Activated B cell treated with CpG ODN at 0.5 μM for 24 hours (primary cell): ENCODE measurements at regions of chr2 and their contacts with region 1.

Region 1: DNA sequence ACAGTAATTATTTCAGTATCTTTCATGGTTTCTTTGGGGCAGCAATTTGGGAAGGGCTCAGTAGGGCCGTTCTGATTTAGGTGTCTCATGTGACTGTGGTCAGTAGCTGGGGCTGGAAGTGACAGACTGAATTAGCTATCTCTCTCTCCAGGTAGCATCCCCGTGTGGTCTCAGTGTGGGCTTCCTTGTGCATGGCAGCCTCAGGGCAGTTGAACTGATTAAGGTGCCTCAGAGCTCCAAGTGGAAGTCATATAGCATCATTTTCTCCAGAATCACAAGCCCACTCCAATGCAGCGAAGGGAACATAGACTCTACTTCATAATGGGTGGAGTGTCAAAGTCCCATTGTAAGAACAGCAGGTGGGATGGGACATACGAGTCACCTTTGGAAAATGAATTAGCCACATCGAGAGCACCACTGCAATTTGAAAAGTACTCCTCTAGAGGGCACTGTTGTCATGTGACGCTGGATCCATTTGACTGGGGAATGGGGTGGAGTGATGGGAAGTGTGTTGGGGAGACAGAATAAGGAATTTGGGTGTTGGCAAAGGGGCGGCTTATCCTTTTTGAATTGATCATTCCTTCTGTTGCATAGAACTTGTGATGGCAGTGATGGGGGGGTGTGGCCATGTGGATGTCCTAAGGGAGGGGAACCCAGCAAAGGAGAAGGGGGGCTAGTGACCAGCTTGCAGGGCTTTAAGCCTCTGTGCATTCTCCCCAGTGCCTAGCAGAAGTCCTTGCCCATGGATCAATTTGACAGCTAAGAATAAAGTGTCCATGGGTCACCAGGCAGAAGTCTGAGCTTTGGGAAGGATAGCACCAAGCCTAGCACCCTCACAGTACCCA is 39.3 kb upstream of the FAM136A start:
- DNase-seq: no peak
- ATAC-seq: no peak
- H3K4me3 Mint-ChIP-seq: no peak overlapping the region
- H3K27ac Mint-ChIP-seq: no peak overlapping the region
- H3K4me1 Mint-ChIP-seq: no peaks in the 10 kb centered on the region
- H3K27me3 Mint-ChIP-seq: peaks cover 27% of the 10 kb centered on the region
- CTCF ChIP-seq: no peak

Region 2: DNA sequence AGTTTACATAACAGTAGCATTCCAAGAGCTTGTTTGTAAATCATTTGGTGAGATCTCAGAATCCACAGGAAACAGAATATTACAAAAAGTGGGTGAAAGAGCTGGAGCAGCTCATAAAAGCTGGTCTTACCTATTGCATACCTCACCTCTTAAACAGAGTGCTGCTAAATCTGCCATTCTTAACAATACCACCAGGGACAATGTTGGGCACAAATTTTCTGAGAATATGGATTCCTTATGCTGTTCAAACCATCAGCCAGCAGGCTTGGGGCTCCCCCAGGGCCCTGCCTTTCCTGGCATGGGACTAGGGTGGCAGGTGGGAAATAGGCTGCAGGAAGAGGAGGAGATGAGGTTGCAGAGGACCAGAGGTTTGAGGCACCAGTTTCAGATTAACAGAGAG is 156.9 kb after region 1 on chr2:
- CTCF ChIA-PET with region 1: no interaction called
- POLR2A ChIA-PET with region 1: no interaction called
- intact Hi-C with region 1: loop called (anchors 10 kb)
- DNase-seq: no peak
- ATAC-seq: no peak
- H3K4me3 Mint-ChIP-seq: no peak overlapping the region
- H3K27ac Mint-ChIP-seq: no peak overlapping the region
- H3K4me1 Mint-ChIP-seq: no peaks in the 10 kb centered on the region
- H3K27me3 Mint-ChIP-seq: peaks cover 18% of the 10 kb centered on the region
- CTCF ChIP-seq: no peak

Region 3: DNA sequence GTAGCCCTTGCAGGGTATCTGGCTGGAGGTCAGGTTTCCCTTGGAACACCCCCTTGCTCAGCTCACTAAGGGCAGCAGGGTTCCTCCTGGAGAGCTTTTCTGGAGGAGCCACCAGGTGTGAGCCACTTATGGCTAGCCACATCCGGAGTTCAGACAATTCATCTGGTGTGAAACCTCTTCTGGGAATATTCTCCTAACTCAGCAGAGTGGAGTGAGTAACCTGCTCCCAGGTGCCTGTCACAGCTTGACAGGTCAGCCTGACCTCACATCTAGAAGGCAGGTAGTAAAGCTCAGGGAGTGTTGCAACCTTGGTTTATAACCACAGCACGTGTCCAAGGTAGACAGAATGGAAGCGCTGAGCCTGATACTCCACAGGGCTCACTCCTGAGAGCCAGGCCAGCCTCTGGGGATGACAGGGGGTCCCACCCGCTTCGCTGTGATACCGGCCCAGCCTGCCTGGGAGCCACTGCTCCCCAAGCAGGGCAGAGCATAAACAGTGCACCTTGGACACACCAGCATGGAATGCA is 275.1 kb after region 1 on chr2:
- CTCF ChIA-PET with region 1: interaction called, 50 read pairs
- POLR2A ChIA-PET with region 1: no interaction called
- intact Hi-C with region 1: loop called (anchors 1 kb)
- DNase-seq: no peak
- ATAC-seq: no peak
- H3K4me3 Mint-ChIP-seq: no peak overlapping the region
- H3K27ac Mint-ChIP-seq: no peak overlapping the region
- H3K4me1 Mint-ChIP-seq: no peaks in the 10 kb centered on the region
- H3K27me3 Mint-ChIP-seq: peaks cover 8% of the 10 kb centered on the region
- CTCF ChIP-seq: no peak

Region 4: DNA sequence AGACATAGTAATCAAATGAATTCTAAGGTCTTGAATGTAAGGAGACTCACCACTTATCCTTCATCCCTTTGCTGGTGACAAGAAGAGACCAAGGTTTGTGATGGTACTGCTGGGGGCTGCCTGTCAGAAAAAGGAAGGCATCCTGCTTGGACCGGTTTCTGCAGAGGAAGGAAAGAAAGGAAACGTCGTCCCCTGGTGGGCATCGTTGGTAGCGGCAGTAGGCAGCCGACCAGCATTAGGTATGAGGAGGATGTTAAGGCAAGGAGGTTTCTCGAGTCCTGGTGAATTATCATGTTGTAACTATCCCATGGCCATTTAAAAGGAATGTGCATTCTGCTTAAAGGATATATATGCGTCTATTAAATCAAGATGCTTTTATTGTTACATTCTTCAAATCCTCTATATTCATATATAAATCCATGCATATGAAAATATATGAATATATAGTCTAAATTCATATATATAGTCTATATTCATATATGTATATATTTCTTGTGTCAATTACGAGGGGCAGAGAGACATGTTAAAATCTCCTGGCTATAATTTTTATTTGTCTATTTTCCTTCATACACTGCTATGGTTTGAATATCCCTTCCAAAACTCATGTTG is 306.8 kb after region 1 on chr2:
- CTCF ChIA-PET with region 1: interaction called, 6 read pairs
- POLR2A ChIA-PET with region 1: no interaction called
- intact Hi-C with region 1: loop called (anchors 1 kb)
- DNase-seq: peak; percentile 52
- ATAC-seq: peak; percentile 77
- H3K4me3 Mint-ChIP-seq: no peak overlapping the region
- H3K27ac Mint-ChIP-seq: no peak overlapping the region
- H3K4me1 Mint-ChIP-seq: no peaks in the 10 kb centered on the region
- H3K27me3 Mint-ChIP-seq: peaks cover 26% of the 10 kb centered on the region
- CTCF ChIP-seq: peak; percentile 84